SK-N-SH (cell line): ENCODE measurements at regions of chr1 and their contacts with region 1.

Region 1: GRCh38 chr1:8015036-8015808 is 10.9 kb downstream of the ERRFI1 start:
- DNase-seq: peak; percentile 62
- H3K4me3 ChIP-seq: no peak overlapping the region; a peak in 1 of 4 replicates
- H3K27ac ChIP-seq: peak overlapping the region; percentile 39 to 54
- H3K4me1 ChIP-seq: peaks cover 13 to 44% of the 10 kb centered on the region in 2 experiments
- H3K27me3 ChIP-seq: no peaks in the 10 kb centered on the region
- CTCF ChIP-seq: peak; percentile 75
- EP300 ChIP-seq: no peak
- RAD21 ChIP-seq: peak; percentile 80

Region 2: DNA sequence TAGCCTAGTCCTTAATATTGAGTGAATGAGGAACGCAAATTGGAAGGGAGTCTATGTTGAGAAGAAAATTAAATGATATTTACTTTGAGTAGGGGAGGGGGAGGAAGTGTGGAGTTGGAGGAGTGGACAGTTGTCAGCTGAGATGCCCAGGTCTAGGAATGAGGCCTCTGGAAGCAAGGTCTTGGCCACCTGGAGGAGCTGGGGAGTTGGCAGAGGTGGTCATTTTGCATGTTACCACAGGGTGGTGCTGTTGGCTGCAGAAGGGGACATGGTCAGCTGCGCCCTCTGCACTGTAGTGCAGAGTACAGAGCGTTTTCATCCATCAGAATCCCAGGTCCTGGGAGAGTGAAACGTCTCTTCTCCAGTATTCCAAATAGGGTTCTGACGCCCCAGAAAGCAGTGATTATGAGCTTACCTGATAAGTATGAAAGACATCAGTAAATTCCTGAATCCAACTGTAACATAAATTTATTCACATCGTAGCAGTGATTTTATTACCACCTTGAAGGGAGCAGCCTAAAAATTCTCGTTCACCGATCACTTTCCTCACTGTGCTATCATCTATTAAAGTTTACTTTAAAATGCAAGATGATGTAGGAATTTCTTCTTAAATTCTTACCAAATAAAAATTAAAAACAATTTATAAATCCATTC is 39.9 kb before region 1 on chr1:
- CTCF ChIA-PET with region 1: interaction called, 74 read pairs
- POLR2A ChIA-PET with region 1: no interaction called
- DNase-seq: peak; percentile 86
- H3K4me3 ChIP-seq: no peak overlapping the region
- H3K27ac ChIP-seq: no peak overlapping the region
- H3K4me1 ChIP-seq: no peaks in the 10 kb centered on the region
- H3K27me3 ChIP-seq: no peaks in the 10 kb centered on the region
- CTCF ChIP-seq: peak; percentile 79
- EP300 ChIP-seq: no peak
- RAD21 ChIP-seq: peak; percentile 81

Region 3: GRCh38 chr1:7983086-7983778 is 32.0 kb before region 1 on chr1:
- CTCF ChIA-PET with region 1: interaction called, 67 read pairs
- POLR2A ChIA-PET with region 1: no interaction called
- DNase-seq: no peak
- H3K4me3 ChIP-seq: no peak overlapping the region
- H3K27ac ChIP-seq: no peak overlapping the region
- H3K4me1 ChIP-seq: no peaks in the 10 kb centered on the region; a peak in 1 of 4 replicates
- H3K27me3 ChIP-seq: no peaks in the 10 kb centered on the region
- CTCF ChIP-seq: no peak
- EP300 ChIP-seq: no peak
- RAD21 ChIP-seq: no peak

Region 4: DNA sequence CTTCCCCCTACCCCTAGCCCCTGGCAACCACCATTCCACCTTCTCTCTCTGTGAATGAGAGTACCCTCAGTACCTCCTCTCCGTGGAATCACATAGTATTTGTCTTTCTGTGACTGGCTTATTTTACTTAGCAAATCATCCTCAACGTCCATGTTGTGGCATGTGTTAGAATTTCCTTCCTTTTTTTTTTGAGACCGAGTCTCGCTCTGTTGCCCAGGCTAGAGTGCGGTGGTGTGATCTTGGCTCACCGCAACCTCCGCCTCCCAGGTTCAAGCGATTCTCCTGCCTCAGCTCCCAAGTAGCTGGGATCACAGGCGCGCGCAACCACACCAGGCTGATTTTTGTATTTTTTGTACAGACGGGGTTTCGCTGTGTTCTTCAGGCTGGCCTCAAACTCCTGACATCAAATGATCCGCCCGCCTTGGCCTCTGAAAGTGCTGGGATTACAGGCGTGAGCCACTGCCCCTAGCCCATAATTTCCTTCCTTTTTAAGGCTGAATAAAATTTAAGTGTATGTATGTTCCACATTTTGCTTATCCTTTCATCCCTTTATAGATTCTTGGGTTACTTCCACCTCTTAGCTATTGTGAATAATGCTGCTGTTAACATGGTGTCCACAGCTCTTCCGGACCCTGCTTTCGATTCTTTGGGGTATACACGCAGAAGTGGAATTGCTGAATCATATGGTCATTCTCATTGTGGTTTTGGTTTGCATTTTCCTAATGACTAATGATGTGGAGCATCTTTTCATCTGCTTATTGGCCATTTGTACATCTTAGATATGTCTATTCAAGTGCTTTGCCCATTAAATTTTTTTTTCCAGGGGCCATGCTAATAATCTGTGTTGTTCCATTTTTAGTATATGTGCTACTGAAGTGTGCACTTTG is 21.4 kb before region 1 on chr1:
- CTCF ChIA-PET with region 1: interaction called, 14 read pairs
- POLR2A ChIA-PET with region 1: no interaction called
- DNase-seq: no peak
- H3K4me3 ChIP-seq: no peak overlapping the region
- H3K27ac ChIP-seq: peak overlapping the region in 1 of 2 experiments; percentile 56; a peak in 2 of 4 replicates
- H3K4me1 ChIP-seq: no peaks in the 10 kb centered on the region
- H3K27me3 ChIP-seq: no peaks in the 10 kb centered on the region
- CTCF ChIP-seq: no peak
- EP300 ChIP-seq: peak in 1 of 2 experiments; percentile 27; a peak in 1 of 4 replicates
- RAD21 ChIP-seq: no peak

Region 5: GRCh38 chr1:8004803-8005554 is 10.2 kb before region 1 on chr1:
- CTCF ChIA-PET with region 1: interaction called, 31 read pairs
- POLR2A ChIA-PET with region 1: no interaction called
- DNase-seq: peak; percentile 48
- H3K4me3 ChIP-seq: no peak overlapping the region
- H3K27ac ChIP-seq: peak overlapping the region; percentile 65 to 66
- H3K4me1 ChIP-seq: peaks cover 6 to 16% of the 10 kb centered on the region in 2 experiments; a peak in 3 of 4 replicates
- H3K27me3 ChIP-seq: no peaks in the 10 kb centered on the region
- CTCF ChIP-seq: no peak
- EP300 ChIP-seq: 0 out of 4 replicates have a peak, but pooled peaks have one; percentile 5 to 29
- RAD21 ChIP-seq: no peak

Region 6: DNA sequence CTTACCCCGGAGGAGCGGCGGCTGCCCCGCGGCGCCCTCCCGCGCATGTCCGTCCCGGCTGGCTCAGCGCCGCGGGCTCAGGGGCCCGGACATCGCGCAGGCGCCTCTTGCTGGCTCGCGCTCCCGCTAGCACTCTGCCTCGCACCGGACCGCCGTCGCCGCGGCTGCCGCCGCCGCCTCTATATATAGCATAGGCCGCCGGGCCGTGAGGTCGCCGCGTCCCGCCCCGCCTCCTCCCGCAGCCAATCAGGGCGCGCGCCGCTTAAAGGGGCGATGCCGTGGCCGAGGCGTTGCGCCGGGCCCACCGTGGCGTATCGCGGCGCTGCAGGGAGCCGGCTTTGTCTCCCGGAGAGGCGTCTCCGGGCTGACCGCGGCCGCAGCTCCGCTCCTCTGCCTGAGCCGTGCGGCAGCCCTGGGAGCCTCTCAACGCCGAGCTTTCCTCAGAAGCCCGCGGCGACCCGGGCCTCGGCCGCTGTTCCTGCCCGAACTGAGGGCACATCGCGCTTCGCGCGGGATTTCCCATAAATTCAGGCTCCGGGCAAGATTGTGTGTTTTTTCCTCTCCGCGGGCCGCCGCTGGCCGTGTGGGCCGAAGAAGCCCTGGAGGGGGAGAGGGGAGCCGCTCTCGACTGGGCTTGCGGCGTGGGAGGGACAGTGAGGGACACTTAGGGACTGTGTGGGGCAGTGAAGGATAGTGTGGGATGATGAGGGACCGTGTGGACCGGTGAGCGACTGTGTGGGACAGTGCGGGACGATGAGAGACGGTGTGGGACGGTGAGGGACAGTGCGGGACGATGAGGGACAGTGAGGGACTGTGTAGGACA is 11.1 kb after region 1 on chr1 and contains the start of gene ERRFI1:
- CTCF ChIA-PET with region 1: interaction called, 28 read pairs
- POLR2A ChIA-PET with region 1: no interaction called
- DNase-seq: peak; percentile 98
- H3K4me3 ChIP-seq: peak within 1 kb of the TSS; percentile 89 to 90
- H3K27ac ChIP-seq: peak within 1 kb of the TSS; percentile 68 to 89; a peak in 3 of 4 replicates
- H3K4me1 ChIP-seq: peaks cover 12 to 39% of the 10 kb centered on the region in 2 experiments; a peak in 3 of 4 replicates
- H3K27me3 ChIP-seq: no peaks in the 10 kb centered on the region
- CTCF ChIP-seq: no peak
- EP300 ChIP-seq: 0 out of 4 replicates have a peak, but pooled peaks of 1 of the 2 experiments have one; percentile 21
- RAD21 ChIP-seq: no peak
- polyA plus RNA-seq, gene ERRFI1: 65.6 and 66.9 TPM in 2 replicates

Region 7: GRCh38 chr1:8348777-8349491 is 333.7 kb after region 1 on chr1:
- CTCF ChIA-PET with region 1: interaction called, 69 read pairs
- POLR2A ChIA-PET with region 1: no interaction called
- DNase-seq: peak; percentile 91
- H3K4me3 ChIP-seq: no peak overlapping the region; a peak in 1 of 4 replicates
- H3K27ac ChIP-seq: no peak overlapping the region
- H3K4me1 ChIP-seq: peaks cover under 1 to 13% of the 10 kb centered on the region in 2 experiments; a peak in 2 of 4 replicates
- H3K27me3 ChIP-seq: no peaks in the 10 kb centered on the region
- CTCF ChIP-seq: peak; percentile 72
- EP300 ChIP-seq: no peak
- RAD21 ChIP-seq: peak; percentile 78